ENCODE measurements at regions of chr1 and their contacts with region 1.

Region 1: GRCh38 chr1:35285771-35286608 is 17.5 kb downstream of the ZMYM4 start:
- DNase-seq: peak in 3 of 35 experiments; percentile 2 to 52 (median 12)
- ATAC-seq: peak; percentile 75 to 92 (median 86)
- H3K4me3 ChIP-seq: peak overlapping the region in 1 of 2 donors; percentile 32
- H3K4me3 Mint-ChIP-seq: peak overlapping the region; percentile 3 to 39 (median 34)
- H3K27ac ChIP-seq: peak overlapping the region; percentile 47
- H3K27ac Mint-ChIP-seq: peak overlapping the region; percentile 75
- H3K4me1 ChIP-seq: peaks cover 7 to 34% of the 10 kb centered on the region in 2 experiments
- H3K4me1 Mint-ChIP-seq: peaks cover 37 to 53% (median 45%) of the 10 kb centered on the region in 3 donors
- H3K27me3 ChIP-seq: no peaks in the 10 kb centered on the region
- H3K27me3 Mint-ChIP-seq: no peaks in the 10 kb centered on the region

Region 2: GRCh38 chr1:35266306-35266705 is 19.7 kb before region 1 on chr1:
- CTCF ChIA-PET with region 1: no interaction called
- POLR2A ChIA-PET with region 1: interaction called in 1 of 2 experiments, 13 read pairs
- DNase-seq: no peak
- ATAC-seq: no peak
- H3K4me3 ChIP-seq: no peak overlapping the region
- H3K4me3 Mint-ChIP-seq: no peak overlapping the region
- H3K27ac ChIP-seq: no peak overlapping the region
- H3K27ac Mint-ChIP-seq: no peak overlapping the region
- H3K4me1 ChIP-seq: peaks cover 9 to 11% of the 10 kb centered on the region in 2 experiments
- H3K4me1 Mint-ChIP-seq: peaks cover 20 to 24% (median 23%) of the 10 kb centered on the region in 3 donors
- H3K27me3 ChIP-seq: peaks cover 0 to 3% of the 10 kb centered on the region in 2 experiments
- H3K27me3 Mint-ChIP-seq: peaks cover 16% of the 10 kb centered on the region in 2 donors

Measured in T-cell (primary cell).